ENCODE measurements at regions of chr14 and their contacts with region 1.

Region 1: DNA sequence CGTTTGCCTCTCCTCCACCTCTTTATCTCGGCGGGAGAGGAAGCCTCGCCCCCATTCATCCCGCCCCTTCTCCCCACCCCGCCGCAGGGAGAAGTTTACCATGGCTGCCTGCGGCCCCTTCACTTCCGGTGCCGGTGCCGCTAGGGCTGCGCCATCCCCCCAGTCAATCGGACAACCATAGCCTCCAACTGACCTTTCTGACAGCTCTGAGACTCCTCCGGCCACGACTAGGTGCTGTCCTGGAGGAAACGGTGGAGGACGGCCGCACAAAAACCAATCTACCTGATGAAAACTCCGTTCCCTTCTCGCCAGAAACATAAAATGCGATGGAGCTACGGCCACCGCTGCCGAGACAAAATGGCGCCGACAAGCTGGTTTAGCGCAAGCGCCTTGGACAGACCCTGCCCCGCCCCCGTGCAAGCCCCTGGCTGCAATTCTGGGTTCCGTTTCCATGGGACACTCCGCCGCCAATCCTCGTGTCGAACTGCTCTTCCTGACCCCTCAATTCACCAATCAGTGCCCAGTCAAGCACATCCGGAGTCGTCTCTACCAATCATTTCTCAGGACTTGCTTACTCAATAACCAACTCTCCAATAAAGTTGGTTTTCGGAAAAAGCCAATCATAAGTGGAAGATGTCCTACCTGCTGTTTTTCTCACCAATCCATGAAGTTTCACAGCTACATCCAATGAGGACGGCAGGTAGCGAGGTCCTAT is 436 bp upstream of the ARID4A start:
- DNase-seq: peak; percentile 99
- H3K4me3 ChIP-seq: peak overlapping the region; percentile 99
- H3K27ac ChIP-seq: peak overlapping the region; percentile 92
- H3K4me1 ChIP-seq: peaks cover 24% of the 10 kb centered on the region
- CTCF ChIP-seq: peak; percentile 41; the same call in 1 of the 2 replicates

Region 2: GRCh38 chr14:58133739-58134138 is 164.2 kb before region 1 on chr14:
- CTCF ChIA-PET with region 1: no interaction called
- POLR2A ChIA-PET with region 1: no interaction called
- intact Hi-C with region 1: no loop called
- DNase-seq: no peak
- H3K4me3 ChIP-seq: no peak overlapping the region
- H3K27ac ChIP-seq: no peak overlapping the region
- H3K4me1 ChIP-seq: no peaks in the 10 kb centered on the region
- CTCF ChIP-seq: no peak

Region 3: DNA sequence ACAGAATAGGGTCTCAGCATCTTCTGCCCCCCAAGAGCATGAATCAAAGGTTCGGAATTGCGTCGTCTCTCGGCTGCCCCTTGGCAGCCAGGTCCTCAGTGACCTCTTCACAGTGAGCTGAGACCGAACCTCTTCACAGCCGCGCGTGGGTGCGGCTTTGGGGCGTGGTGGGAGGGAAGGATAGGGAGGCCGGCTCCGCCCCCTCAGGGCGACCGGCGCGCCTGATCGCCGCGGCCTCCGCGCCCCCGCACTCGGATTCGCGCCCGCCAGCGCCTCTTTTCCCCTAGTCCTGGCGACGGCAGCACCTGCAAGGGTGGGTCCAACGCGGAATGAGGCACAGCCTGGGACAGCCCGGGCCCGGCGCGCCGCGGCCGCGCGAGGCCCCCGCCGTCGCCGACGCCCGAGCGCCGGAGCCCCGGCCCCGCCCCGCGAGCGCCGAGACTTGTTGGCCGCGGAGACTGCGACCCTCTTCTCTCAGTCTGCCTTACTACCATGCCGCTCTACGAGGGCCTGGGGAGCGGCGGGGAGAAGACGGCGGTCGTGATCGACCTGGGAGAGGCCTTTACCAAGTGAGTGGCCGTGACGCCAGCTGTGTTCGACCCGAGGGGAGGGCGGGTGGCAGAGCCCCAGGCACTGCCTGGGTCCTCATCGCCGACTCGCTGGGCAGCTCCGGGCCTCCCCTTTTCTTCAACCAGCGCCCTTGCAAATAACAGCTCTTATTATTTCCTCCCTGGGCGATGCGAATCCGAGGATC is 98.0 kb before region 1 on chr14 and contains the start of gene ACTR10:
- CTCF ChIA-PET with region 1: no interaction called
- POLR2A ChIA-PET with region 1: interaction called, 3 read pairs
- intact Hi-C with region 1: loop called (anchors 1 kb)
- DNase-seq: peak; percentile 91
- H3K4me3 ChIP-seq: peak within 1 kb of the TSS; percentile 95
- H3K27ac ChIP-seq: peak within 1 kb of the TSS; percentile 59
- H3K4me1 ChIP-seq: peaks cover 18% of the 10 kb centered on the region
- CTCF ChIP-seq: no peak
- total RNA-seq, gene ACTR10: 34.3 and 42.5 TPM in 2 replicates

Region 4: DNA sequence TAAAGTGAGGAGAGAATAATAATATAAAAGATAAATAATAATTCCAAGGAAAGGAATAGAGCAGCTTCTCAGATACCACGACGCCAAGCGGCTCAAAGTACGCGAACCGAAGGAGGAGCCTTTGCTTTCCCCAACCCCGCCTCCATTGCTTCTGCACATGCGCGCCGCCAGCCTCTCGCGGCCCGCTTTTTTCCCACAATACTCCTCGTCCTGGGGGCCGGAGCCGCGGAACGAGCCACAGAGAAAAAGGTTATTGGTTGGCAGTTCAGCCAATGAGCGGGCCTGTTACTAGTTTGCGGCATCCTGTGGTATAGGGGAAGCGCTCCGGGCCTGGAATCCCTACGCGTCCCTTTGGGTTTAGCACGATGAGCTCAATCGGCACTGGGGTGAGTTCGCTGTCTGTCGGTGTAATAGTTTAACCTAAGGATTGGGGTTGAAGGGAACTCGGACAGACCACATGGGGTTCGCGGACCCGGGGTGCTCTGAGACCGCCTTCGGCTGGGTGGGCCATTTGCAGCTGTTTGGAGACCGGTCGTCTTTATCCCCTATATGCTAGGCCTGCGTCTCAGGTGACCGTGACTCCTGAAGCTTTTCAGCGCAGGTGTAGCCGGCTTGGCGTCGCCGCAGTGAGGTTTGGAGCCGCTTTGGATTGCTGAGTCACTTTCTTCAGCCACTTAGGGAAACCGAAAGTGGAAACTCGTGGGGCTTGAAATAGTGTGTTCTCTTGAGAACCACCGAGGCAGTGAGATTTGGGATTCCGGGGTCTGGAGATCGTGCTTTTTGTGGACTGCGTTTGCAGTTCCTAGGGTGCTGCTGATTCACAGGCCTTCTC is 53.1 kb before region 1 on chr14 and contains the start of gene PSMA3:
- CTCF ChIA-PET with region 1: interaction called, 4 read pairs
- POLR2A ChIA-PET with region 1: interaction called, 16 read pairs
- intact Hi-C with region 1: loop called (anchors 1 kb)
- DNase-seq: peak; percentile 97
- H3K4me3 ChIP-seq: peak within 1 kb of the TSS; percentile 92
- H3K27ac ChIP-seq: peak within 1 kb of the TSS; percentile 88
- H3K4me1 ChIP-seq: peaks cover 33% of the 10 kb centered on the region
- CTCF ChIP-seq: no peak
- total RNA-seq, gene PSMA3: 88.9 and 89.1 TPM in 2 replicates

Measured in OCI-LY7 (cell line).